Endothelial cell of umbilical vein (primary cell): ENCODE measurements at regions of chr2 and their contacts with region 1.

Region 1: DNA sequence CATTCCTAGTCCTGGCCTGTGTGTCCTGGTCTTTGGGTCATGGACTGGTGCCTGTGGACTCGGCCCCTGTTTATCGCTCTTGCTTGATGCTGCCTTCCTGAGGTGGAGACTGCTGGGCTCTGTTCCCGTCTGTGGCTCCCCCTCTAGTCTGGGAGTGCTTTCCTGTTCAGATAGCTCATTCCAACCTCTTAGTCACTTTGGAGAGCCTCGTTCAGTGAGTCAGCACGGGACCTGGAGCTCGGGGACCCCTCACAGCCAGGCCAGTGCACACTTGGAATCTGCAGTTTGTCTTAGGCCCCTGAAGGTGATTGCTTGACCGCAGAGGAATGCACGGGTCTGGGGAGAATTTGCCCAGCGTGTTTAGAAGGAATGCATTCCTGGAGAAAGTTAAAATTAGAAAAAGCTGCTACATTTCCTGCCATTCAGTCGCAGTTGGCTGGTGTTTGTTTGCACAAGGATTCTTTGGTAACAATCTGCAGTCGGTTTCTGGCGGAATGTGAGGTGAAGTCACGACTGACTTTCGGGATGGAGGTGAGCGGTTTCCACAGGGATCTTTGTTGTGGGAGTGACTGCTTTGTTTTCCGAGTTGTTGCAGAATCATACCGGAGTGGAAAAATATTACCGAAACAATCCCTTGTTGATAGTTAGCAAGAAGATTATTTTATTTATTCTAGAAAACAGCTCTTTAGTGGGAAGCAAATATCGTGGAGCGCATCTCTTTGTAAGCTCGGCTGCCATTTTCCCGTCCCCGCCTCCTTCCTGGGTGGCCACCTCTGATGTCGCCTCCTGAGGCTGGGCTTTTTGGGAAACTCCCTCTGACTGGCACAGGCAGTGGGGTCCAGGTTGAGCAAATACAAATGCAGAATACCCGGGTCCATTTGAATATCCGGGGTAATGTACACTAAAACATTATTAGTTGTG is 29.6 kb downstream of the SH3BP4 start:
- DNase-seq: peak; percentile 99
- H3K4me3 ChIP-seq: peak overlapping the region in 2 of 3 experiments; percentile 37 to 53
- H3K27ac ChIP-seq: peak overlapping the region; percentile 97
- H3K4me1 ChIP-seq: peaks cover 76% of the 10 kb centered on the region
- H3K27me3 ChIP-seq: no peaks in the 10 kb centered on the region
- CTCF ChIP-seq: peak in 1 of 2 donors; percentile 4
- POLR2A ChIP-seq: peak; percentile 46

Region 2: GRCh38 chr2:234620018-234620417 is 361.4 kb before region 1 on chr2:
- CTCF ChIA-PET with region 1: no interaction called
- POLR2A ChIA-PET with region 1: no interaction called
- dilution Hi-C with region 1: no loop called
- intact Hi-C with region 1: loop called (anchors 1 kb)
- DNase-seq: peak; percentile 84
- H3K4me3 ChIP-seq: no peak overlapping the region
- H3K27ac ChIP-seq: no peak overlapping the region
- H3K4me1 ChIP-seq: peaks cover 20% of the 10 kb centered on the region
- H3K27me3 ChIP-seq: peaks cover 34 to 41% of the 10 kb centered on the region in 2 experiments
- CTCF ChIP-seq: no peak
- POLR2A ChIP-seq: peak; percentile 73

Region 3: DNA sequence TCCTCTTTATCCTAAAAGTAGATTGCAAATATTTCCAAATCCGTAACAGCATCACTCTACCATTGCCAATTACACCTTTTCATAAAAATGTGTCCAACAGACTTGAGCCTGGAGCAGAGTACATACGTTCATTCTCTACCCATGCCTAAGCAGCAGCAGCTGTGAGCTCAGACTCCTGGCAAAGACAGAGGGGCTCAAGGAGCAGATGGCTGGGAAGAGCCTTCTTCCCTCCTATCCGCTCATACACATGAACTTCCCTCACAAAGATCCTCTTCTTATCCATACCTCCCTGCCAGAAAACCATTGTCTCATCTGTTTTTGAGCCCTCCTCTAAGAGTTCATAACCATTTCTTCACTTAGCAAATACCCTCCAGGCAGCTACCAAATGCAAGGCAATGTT is 320.3 kb before region 1 on chr2:
- CTCF ChIA-PET with region 1: no interaction called
- POLR2A ChIA-PET with region 1: no interaction called
- dilution Hi-C with region 1: no loop called
- intact Hi-C with region 1: no loop called
- DNase-seq: no peak
- H3K4me3 ChIP-seq: no peak overlapping the region
- H3K27ac ChIP-seq: no peak overlapping the region
- H3K4me1 ChIP-seq: no peaks in the 10 kb centered on the region
- H3K27me3 ChIP-seq: peaks cover 3 to 14% of the 10 kb centered on the region in 2 experiments
- CTCF ChIP-seq: no peak
- POLR2A ChIP-seq: no peak

Region 4: GRCh38 chr2:234823877-234824376 is 157.5 kb before region 1 on chr2:
- CTCF ChIA-PET with region 1: no interaction called
- POLR2A ChIA-PET with region 1: interaction called, 3 read pairs
- dilution Hi-C with region 1: no loop called
- intact Hi-C with region 1: loop called (anchors 1 kb)
- DNase-seq: peak; percentile 98
- H3K4me3 ChIP-seq: no peak overlapping the region
- H3K27ac ChIP-seq: peak overlapping the region; percentile 90
- H3K4me1 ChIP-seq: peaks cover 24% of the 10 kb centered on the region
- H3K27me3 ChIP-seq: no peaks in the 10 kb centered on the region
- CTCF ChIP-seq: no peak
- POLR2A ChIP-seq: peak; percentile 69

Region 5: DNA sequence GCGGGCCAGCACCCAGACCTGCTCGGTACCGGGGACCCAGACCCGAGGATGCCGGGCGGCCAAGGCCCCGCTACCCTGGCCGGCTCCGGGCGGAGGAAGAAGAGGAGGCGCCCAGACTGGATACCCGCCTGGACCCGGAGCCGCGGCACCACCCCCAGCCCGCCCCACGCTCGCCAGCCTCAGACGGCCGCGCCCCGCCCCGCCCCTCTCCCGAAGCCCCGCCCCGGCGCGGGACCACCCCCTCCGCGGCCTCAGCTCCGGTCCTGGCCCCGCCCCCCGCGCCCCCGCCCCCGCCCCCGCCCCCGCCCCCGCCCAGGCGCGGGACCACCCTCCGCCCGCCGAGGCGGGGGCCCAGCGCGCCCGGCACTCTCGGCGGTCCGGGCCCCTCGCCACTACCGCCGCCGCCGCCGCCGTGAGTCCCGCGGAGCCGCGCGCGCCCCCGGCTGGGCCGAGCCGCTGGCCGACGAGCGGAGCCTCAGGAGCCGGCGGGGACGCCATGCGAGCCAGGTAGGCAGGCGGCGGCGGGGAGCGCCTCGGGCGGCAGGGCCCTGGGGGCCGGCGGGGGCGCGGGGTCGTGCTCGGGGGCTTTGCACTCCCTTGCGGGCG is 29.7 kb before region 1 on chr2 and contains the start of gene SH3BP4:
- CTCF ChIA-PET with region 1: interaction called, 11 read pairs
- POLR2A ChIA-PET with region 1: interaction called, 12 read pairs
- dilution Hi-C with region 1: no loop called
- intact Hi-C with region 1: loop called (anchors 1 kb)
- DNase-seq: peak; percentile 64
- H3K4me3 ChIP-seq: peak within 1 kb of the TSS; percentile 87 to 95 (median 94)
- H3K27ac ChIP-seq: peak within 1 kb of the TSS; percentile 92
- H3K4me1 ChIP-seq: peaks cover 28% of the 10 kb centered on the region
- H3K27me3 ChIP-seq: no peaks in the 10 kb centered on the region
- CTCF ChIP-seq: no peak
- POLR2A ChIP-seq: peak; percentile 60
- total RNA-seq, gene SH3BP4: 100.0 and 105 TPM in 2 replicates

Region 6: GRCh38 chr2:234996069-234996940 is 14.8 kb after region 1 on chr2:
- CTCF ChIA-PET with region 1: interaction called, 9 read pairs
- POLR2A ChIA-PET with region 1: interaction called, 3 read pairs
- dilution Hi-C with region 1: no loop called
- intact Hi-C with region 1: loop called (anchors 1 kb)
- DNase-seq: peak; percentile 64
- H3K4me3 ChIP-seq: no peak overlapping the region
- H3K27ac ChIP-seq: peak overlapping the region; percentile 88
- H3K4me1 ChIP-seq: peaks cover 56% of the 10 kb centered on the region
- H3K27me3 ChIP-seq: no peaks in the 10 kb centered on the region
- CTCF ChIP-seq: peak; percentile 41 to 53
- POLR2A ChIP-seq: no peak

Region 7: GRCh38 chr2:235216901-235217300 is 235.4 kb after region 1 on chr2:
- CTCF ChIA-PET with region 1: no interaction called
- POLR2A ChIA-PET with region 1: no interaction called
- dilution Hi-C with region 1: no loop called
- intact Hi-C with region 1: no loop called
- DNase-seq: no peak
- H3K4me3 ChIP-seq: no peak overlapping the region
- H3K27ac ChIP-seq: no peak overlapping the region
- H3K4me1 ChIP-seq: no peaks in the 10 kb centered on the region
- H3K27me3 ChIP-seq: peaks cover 0 to 4% of the 10 kb centered on the region in 2 experiments
- CTCF ChIP-seq: no peak
- POLR2A ChIP-seq: no peak